A673 (cell line): ENCODE measurements at regions of chr20 and their contacts with region 1.

Region 1: DNA sequence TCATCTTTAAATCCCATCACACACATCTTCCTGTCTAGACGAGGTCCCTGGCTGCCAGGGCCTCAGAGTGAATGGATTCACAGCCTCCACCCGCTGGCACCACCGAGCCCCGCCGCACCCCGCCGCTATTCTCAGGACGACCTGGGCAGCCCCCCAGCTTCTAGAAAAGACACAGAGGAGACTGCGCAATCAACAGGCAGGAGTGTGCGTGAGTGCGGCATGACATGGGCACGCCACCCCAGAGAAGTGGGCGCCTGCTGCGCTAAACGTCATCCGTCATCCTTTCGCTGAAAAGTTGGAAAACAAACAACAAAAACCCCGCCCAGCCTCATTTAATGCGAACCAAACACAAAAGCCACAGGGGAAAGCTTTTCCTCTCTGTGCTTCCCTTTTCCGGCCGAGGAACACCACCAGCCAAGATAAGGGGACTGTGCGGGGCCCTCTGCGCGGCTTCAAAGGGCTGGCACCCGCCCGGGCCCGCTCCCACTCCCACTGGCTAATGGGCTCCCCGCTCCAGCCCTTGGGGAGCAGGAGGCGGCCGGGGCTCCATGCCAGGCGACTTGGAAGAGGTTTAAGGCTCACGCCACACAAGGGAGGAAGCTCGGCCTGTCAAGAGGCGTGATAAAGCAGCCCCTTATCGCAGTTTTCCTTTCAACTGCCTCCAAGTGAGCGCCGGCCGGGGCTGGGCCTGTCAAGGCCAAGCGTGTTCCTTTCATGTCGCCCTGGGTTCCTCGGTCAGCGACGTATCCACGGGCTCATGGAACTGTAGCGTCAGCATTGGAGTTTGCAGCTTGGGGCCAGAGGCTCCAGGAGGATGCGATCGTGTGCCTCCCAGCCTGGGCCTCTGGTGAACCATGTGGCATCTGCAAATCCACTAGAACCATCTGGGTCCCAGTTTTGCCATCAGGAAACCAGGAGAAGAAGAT is 50.1 kb downstream of the NFATC2 start:
- DNase-seq: peak; percentile 95
- H3K4me3 ChIP-seq: peak overlapping the region; percentile 22
- H3K27ac ChIP-seq: peak overlapping the region; percentile 74
- H3K4me1 ChIP-seq: peaks cover 87% of the 10 kb centered on the region
- H3K27me3 ChIP-seq: no peaks in the 10 kb centered on the region
- CTCF ChIP-seq: no peak

Region 2: GRCh38 chr20:51560550-51561307 is 68.3 kb after region 1 on chr20:
- CTCF ChIA-PET with region 1: no interaction called
- POLR2A ChIA-PET with region 1: no interaction called
- intact Hi-C with region 1: loop called (anchors 2 kb)
- DNase-seq: no peak
- H3K4me3 ChIP-seq: peak overlapping the region; percentile 57
- H3K27ac ChIP-seq: no peak overlapping the region
- H3K4me1 ChIP-seq: peaks cover 26% of the 10 kb centered on the region
- H3K27me3 ChIP-seq: no peaks in the 10 kb centered on the region
- CTCF ChIP-seq: no peak